ENCODE measurements at regions of chr4 and their contacts with region 1.

Region 1: DNA sequence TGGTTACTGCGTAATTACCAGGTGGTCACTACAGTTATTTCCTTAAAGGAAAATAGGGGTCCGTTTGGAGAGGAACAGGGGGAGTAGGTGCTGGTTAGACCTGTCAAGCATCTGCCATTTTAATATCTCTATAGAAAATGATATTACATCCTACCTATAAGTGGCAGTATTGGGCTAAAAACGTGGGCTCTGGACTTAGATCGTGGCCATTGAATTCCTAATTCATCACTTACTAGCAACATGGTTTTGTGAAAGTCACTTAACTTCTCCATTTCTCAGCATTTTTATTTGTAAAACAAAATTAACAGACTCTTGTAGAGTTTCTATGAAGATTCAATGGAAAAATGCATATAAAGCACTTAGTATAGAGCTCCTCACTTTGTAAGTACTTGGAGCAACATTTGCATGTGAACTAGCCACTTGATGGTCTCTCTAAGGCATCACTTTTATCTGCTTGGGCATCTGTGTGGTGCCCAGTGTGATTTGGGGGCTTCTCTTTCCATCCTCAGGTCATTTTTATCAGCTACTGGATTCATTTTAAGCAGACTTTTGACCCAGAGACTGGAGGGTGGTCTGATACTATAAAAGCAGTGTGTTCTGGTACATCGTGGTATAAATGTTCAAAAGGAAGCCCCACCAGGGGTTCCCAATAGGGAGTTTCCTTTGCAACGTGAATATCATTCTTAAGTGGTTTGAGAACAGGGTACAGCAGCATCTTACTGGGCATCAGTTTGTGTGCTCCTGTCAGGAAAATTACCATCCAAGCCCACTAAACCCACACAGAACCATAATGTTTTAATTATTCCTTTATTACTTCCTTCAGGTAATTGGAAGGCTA is 42.7 kb upstream of the RASSF6 start:
- DNase-seq: peak; percentile 64
- H3K4me3 ChIP-seq: no peak overlapping the region
- H3K27ac ChIP-seq: peak overlapping the region; percentile 74
- H3K4me1 ChIP-seq: peaks cover 19% of the 10 kb centered on the region
- H3K27me3 ChIP-seq: no peaks in the 10 kb centered on the region
- CTCF ChIP-seq: peak; percentile 48 to 59

Region 2: DNA sequence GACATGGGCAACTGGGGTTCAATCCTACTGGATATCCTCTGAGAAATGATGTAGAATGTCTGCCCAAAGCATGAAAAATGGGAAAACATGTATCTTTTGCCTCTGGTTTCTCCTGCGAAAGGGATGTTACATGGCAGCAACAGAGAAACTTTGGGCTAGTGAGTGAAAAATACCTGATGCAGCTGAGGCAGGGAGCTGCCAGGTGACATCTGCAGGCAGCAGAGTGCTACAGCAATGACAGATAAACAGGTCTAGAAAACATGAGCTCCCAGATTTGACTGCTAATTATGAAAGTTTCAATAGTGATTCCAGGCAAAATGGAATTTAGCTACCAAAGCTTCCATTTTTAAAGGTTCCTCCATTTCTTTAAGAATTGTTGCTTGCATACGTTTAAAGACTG is 201.4 kb after region 1 on chr4:
- CTCF ChIA-PET with region 1: interaction called, 22 read pairs
- dilution Hi-C with region 1: no loop called
- in situ Hi-C with region 1: loop called in 1 of 2 experiments (anchors 10 kb)
- intact Hi-C with region 1: loop called (anchors 1 kb)
- DNase-seq: peak; percentile 59
- H3K4me3 ChIP-seq: no peak overlapping the region
- H3K27ac ChIP-seq: no peak overlapping the region
- H3K4me1 ChIP-seq: peaks cover 25% of the 10 kb centered on the region
- H3K27me3 ChIP-seq: no peaks in the 10 kb centered on the region
- CTCF ChIP-seq: peak; percentile 79 to 91

Region 3: GRCh38 chr4:73922766-73923630 is 260.1 kb after region 1 on chr4:
- CTCF ChIA-PET with region 1: interaction called, 4 read pairs
- dilution Hi-C with region 1: loop called (anchors 10 kb)
- in situ Hi-C with region 1: loop called (anchors 5 to 10 kb)
- intact Hi-C with region 1: loop called (anchors 1 kb)
- DNase-seq: peak; percentile 33
- H3K4me3 ChIP-seq: no peak overlapping the region
- H3K27ac ChIP-seq: peak overlapping the region; percentile 3
- H3K4me1 ChIP-seq: peaks cover 10% of the 10 kb centered on the region
- H3K27me3 ChIP-seq: no peaks in the 10 kb centered on the region
- CTCF ChIP-seq: peak; percentile 35 to 53

Region 4: DNA sequence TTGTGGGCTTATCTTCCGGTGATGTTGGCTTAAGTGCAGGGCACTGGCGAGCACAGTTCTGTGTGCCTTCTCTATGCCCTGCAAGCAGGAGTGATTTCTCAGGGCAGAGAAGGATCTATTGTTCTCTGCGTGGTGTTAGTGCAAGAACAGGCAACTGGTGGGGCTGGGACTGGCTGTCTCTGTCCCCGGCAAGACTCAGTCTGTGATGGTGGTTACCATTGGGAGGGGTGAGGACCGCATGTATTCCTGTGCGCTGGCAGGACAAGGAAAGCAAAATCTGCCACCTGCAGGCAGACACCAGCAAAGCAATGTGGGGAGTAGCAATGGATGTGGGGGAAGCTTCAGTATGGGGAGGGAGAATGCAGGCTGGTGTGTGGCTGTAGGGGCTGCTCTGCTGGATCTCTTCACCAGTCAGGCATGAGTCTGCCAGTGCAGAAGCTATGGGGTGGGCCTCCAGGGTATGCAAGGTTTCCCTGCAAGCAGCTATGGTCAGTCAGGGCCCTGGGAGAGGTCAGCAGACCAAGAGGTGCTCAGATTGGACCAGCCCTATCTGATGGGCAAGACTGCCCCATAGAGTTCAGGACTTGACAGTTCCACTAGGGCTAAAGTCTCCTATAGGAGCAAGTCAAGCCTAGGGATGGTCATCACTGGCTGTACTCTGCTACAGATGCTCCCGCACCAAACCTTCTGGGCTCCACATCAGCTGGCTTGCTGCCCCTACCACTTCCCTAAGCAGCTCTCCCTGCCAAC is 302.1 kb after region 1 on chr4:
- CTCF ChIA-PET with region 1: no interaction called
- dilution Hi-C with region 1: no loop called
- in situ Hi-C with region 1: no loop called
- intact Hi-C with region 1: no loop called
- DNase-seq: no peak
- H3K4me3 ChIP-seq: no peak overlapping the region
- H3K27ac ChIP-seq: no peak overlapping the region
- H3K4me1 ChIP-seq: no peaks in the 10 kb centered on the region
- H3K27me3 ChIP-seq: no peaks in the 10 kb centered on the region
- CTCF ChIP-seq: peak in 1 of 2 donors; percentile 55

Region 5: GRCh38 chr4:74098450-74098994 is 435.6 kb after region 1 on chr4:
- CTCF ChIA-PET with region 1: no interaction called
- dilution Hi-C with region 1: no loop called
- in situ Hi-C with region 1: no loop called
- intact Hi-C with region 1: loop called (anchors 2 kb)
- DNase-seq: no peak
- H3K4me3 ChIP-seq: peak overlapping the region; percentile 71 to 88 (median 85)
- H3K27ac ChIP-seq: peak overlapping the region; percentile 94
- H3K4me1 ChIP-seq: peaks cover 17% of the 10 kb centered on the region
- H3K27me3 ChIP-seq: no peaks in the 10 kb centered on the region
- CTCF ChIP-seq: no peak

Region 6: DNA sequence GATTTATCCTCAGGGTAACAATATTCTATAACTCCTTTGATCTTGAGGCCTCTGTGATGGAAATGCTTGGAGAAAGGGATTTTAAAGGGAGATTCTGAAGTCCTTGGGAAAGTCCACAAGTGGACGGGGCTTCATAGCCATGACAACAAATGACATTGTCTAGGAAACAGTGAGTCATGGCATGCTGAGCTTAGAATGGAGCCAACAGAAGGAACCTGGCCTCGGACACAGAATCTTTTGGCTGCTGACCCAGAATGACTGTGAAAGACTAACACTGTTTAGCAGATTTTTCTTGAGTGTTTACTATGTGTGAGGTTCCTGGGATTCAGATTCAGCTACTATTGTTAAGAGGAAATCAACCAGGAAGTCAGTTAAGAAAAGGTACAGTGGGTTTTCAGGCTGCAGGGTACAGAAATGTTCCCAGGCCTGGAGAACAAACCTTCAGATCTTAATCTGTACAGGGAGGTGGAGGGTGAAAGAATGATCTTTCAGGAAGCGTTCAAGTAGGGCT is 454.2 kb after region 1 on chr4:
- CTCF ChIA-PET with region 1: no interaction called
- dilution Hi-C with region 1: no loop called
- in situ Hi-C with region 1: loop called in 1 of 2 experiments (anchors 10 kb)
- intact Hi-C with region 1: no loop called
- DNase-seq: peak; percentile 95
- H3K4me3 ChIP-seq: peak overlapping the region in 2 of 3 experiments; percentile 27 to 63
- H3K27ac ChIP-seq: peak overlapping the region; percentile 99
- H3K4me1 ChIP-seq: peaks cover 43% of the 10 kb centered on the region
- H3K27me3 ChIP-seq: no peaks in the 10 kb centered on the region
- CTCF ChIP-seq: no peak

Measured in mammary epithelial cell (primary cell).